GM10248 (cell line): ENCODE measurements at regions of chr11 and their contacts with region 1.

Region 1: GRCh38 chr11:31870609-31871309 is 59.6 kb upstream of the PAX6 start:
- DNase-seq: peak; percentile 51
- CTCF ChIP-seq: peak; percentile 60

Region 2: GRCh38 chr11:31107062-31107461 is 763.7 kb before region 1 on chr11:
- CTCF ChIA-PET with region 1: interaction called, 26 read pairs
- POLR2A ChIA-PET with region 1: no interaction called
- DNase-seq: peak; percentile 26
- CTCF ChIP-seq: peak; percentile 60

Region 3: DNA sequence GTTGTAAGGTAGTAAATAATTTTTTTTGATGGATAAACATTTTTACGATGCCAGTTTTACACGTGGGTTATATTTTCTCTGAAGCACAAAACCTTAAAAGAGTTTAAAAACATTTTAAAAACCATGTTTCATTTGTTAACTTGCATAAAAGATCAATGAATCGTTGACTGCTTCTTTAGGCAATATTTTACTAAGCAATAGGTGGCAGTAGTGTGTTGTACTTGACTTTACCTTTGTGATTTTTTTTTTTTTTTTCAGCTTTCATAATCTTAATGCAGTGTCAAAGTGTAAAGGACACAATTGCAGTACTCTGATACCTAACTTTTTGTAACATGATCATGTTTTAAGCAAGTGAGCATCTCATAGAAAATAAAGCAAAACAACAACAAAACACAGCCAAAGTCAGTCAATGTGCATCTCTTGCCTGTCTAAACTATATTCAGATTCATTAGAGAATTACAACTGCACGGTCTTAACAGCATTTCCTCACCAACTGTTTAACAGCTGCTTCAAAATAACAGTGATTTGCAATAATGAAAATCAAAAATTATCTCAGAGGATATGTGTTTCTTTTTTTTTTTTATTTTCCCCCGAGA is 473.4 kb before region 1 on chr11:
- CTCF ChIA-PET with region 1: interaction called, 20 read pairs
- POLR2A ChIA-PET with region 1: no interaction called
- DNase-seq: peak; percentile 21
- CTCF ChIP-seq: peak; percentile 37

Region 4: DNA sequence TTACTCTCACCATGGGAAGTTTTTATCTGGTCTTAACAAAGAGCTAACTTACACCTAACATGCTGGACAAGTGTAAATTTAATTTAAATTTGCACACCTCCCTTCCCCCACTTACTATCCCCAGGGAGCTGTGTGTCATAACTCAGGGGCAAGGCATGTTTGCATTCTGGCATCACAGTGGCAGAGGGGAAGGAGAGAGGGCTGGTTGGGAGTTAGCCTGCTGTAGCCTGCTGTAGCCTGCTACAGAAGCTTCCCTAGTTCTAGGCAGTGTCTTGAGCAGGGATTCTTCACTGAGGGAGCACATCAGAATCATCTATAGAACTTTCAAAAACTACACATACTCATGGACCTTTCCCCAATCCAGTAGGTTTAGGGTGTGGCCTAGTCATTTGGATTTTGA is 10.4 kb before region 1 on chr11:
- CTCF ChIA-PET with region 1: interaction called, 11 read pairs
- POLR2A ChIA-PET with region 1: no interaction called
- DNase-seq: no peak
- CTCF ChIP-seq: no peak

Region 5: GRCh38 chr11:31882951-31883392 is 12.2 kb after region 1 on chr11:
- CTCF ChIA-PET with region 1: interaction called, 11 read pairs
- POLR2A ChIA-PET with region 1: no interaction called
- DNase-seq: no peak
- CTCF ChIP-seq: no peak